AG04450 (cell line): ENCODE measurements at regions of chr1 and their contacts with region 1.

Region 1: GRCh38 chr1:30379684-30380624 is 343.4 kb downstream of the MATN1 start:
- DNase-seq: peak; percentile 45
- H3K4me3 ChIP-seq: no peak overlapping the region
- H3K27ac ChIP-seq: no peak overlapping the region
- H3K27me3 ChIP-seq: peaks cover 9% of the 10 kb centered on the region
- CTCF ChIP-seq: peak; percentile 87

Region 2: DNA sequence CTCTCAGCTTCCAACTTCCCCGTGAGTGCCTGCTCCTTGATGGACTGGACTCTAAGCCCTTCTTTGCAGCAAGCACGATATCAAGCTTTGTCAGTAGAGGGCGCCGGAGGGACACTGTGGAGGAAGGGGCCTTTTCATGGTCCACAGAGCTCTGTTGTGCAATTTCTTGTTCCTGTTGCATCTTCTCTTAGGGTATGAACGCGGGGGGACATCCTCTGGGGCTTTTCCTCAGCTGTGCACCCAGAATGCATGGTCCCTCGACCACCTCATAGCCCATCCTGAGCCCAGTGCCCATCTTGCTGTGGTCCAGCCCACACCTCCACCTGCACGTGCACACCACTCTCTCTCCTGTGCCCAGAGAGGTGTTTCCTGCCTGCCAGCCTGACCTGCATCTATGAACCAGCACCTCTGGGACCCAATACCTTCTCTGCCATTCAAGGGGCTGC is 586.8 kb before region 1 on chr1:
- CTCF ChIA-PET with region 1: interaction called, 15 read pairs
- POLR2A ChIA-PET with region 1: no interaction called
- DNase-seq: peak; percentile 48
- H3K4me3 ChIP-seq: no peak overlapping the region
- H3K27ac ChIP-seq: no peak overlapping the region
- H3K27me3 ChIP-seq: peaks cover 3% of the 10 kb centered on the region
- CTCF ChIP-seq: peak; percentile 91

Region 3: GRCh38 chr1:30068787-30069472 is 311.0 kb before region 1 on chr1:
- CTCF ChIA-PET with region 1: no interaction called
- POLR2A ChIA-PET with region 1: no interaction called
- DNase-seq: no peak
- H3K4me3 ChIP-seq: no peak overlapping the region
- H3K27ac ChIP-seq: no peak overlapping the region
- H3K27me3 ChIP-seq: no peaks in the 10 kb centered on the region
- CTCF ChIP-seq: no peak

Region 4: GRCh38 chr1:30353637-30354036 is 26.3 kb before region 1 on chr1:
- CTCF ChIA-PET with region 1: interaction called, 22 read pairs
- POLR2A ChIA-PET with region 1: no interaction called
- DNase-seq: no peak
- H3K4me3 ChIP-seq: no peak overlapping the region
- H3K27ac ChIP-seq: no peak overlapping the region
- H3K27me3 ChIP-seq: no peaks in the 10 kb centered on the region
- CTCF ChIP-seq: peak; percentile 30; the same call in 1 of the 2 replicates

Region 5: GRCh38 chr1:30366911-30367310 is 13.0 kb before region 1 on chr1:
- CTCF ChIA-PET with region 1: interaction called, 12 read pairs
- POLR2A ChIA-PET with region 1: no interaction called
- DNase-seq: no peak
- H3K4me3 ChIP-seq: no peak overlapping the region
- H3K27ac ChIP-seq: no peak overlapping the region
- H3K27me3 ChIP-seq: no peaks in the 10 kb centered on the region
- CTCF ChIP-seq: no peak

Region 6: DNA sequence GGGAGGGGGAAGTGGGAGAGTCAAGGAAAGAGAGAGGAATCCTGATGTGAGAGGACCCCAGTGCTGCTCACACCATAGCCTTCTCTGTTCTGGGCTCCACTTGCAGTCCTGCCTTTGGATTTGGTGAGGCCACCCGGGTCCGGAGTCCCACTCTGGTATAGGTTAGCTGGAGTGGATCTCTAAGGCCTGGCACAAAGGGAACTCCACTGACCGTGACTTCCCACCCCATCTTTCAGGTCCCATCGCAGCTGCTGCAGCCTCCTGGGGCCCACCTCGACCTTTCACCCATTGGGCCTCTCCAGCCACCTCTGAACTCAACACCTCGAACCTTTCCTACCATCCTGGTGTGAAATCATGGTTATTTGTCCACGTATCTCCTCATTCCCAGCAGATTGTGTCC is 19.1 kb after region 1 on chr1:
- CTCF ChIA-PET with region 1: interaction called, 17 read pairs
- POLR2A ChIA-PET with region 1: no interaction called
- DNase-seq: no peak
- H3K4me3 ChIP-seq: no peak overlapping the region
- H3K27ac ChIP-seq: no peak overlapping the region
- H3K27me3 ChIP-seq: no peaks in the 10 kb centered on the region
- CTCF ChIP-seq: no peak

Region 7: GRCh38 chr1:30707412-30708360 is 327.7 kb after region 1 on chr1:
- CTCF ChIA-PET with region 1: interaction called, 13 read pairs
- POLR2A ChIA-PET with region 1: no interaction called
- DNase-seq: no peak
- H3K4me3 ChIP-seq: no peak overlapping the region
- H3K27ac ChIP-seq: no peak overlapping the region
- H3K27me3 ChIP-seq: peaks cover 43% of the 10 kb centered on the region
- CTCF ChIP-seq: peak; percentile 92